PC-9 (cell line): ENCODE measurements at regions of chr9 and their contacts with region 1.

Region 1: DNA sequence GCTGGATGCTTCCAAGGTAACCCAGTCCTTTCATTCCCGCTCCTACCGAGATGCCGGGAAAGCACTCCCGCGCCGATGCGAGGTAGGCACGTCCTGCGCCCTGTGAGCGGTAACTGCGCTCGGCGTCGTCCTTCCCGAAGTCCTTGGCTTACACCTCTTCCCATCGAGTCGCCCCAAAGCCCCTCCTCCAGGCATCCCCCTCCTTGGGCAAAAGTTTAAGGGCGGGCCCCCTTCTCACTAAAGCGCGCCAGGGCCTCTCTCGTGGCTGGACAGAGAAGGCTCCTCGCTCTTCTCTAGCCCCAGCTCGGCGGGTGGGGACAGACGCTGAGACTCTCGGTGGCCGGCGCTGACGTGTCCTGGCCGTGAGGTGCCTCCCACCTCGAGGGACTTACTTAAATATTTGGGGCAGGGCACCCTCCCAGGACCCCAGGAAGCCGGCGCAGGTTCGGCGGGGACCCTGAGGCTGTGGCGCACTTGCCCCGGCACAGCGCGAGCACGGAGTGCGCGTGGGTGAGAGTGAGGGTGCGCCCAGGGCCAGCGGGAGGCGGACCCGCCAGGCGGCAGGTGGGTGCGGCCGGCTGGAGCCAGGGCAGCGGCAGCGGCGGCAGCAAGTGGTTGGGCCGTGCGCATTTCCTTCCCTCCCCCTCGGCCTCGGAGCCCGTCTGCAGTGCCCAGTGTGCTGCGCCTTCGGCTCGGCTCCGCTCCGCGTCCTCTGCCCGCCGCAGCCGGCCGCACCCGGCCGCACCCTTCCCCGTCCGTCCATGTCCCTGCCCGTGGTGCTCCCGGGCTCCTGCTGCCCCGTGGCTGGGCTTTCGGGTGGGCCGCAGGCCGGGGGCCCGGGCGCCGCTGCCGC is at the start of gene ENTREP1:
- DNase-seq: peak; percentile 61 to 71
- H3K4me3 ChIP-seq: peak within 1 kb of the TSS; percentile 75
- H3K27ac ChIP-seq: no peak within 1 kb of the TSS
- H3K4me1 ChIP-seq: peaks cover 5% of the 10 kb centered on the region; the same call in 1 of the 2 replicates
- H3K27me3 ChIP-seq: peaks cover 8% of the 10 kb centered on the region
- CTCF ChIP-seq: no peak
- total RNA-seq, gene ENTREP1: 0.30 and 0.35 TPM in 2 replicates

Region 2: DNA sequence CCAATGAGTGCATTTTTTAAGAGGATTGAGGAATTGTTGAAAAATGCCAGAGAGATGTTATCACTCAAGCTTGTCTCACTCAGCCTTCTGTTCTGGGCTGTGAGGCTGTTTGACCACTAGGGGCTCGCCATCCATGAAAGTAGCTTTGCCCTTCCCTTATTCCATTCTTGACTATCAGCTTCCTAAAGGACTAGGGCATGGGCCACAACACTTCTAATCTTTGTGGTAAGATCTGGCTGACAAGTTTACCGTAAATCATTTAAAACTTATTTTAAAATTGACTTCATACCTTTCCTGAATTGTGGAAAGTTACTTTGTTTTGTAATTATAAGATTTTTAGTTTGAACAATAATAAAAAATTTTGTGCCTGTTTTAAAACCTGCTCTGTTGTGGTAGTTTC is 101.2 kb before region 1 on chr9:
- CTCF ChIA-PET with region 1: interaction called, 14 read pairs
- POLR2A ChIA-PET with region 1: no interaction called
- intact Hi-C with region 1: no loop called
- DNase-seq: peak; percentile 49 to 55
- H3K4me3 ChIP-seq: no peak overlapping the region
- H3K27ac ChIP-seq: no peak overlapping the region
- H3K4me1 ChIP-seq: no peaks in the 10 kb centered on the region
- H3K27me3 ChIP-seq: no peaks in the 10 kb centered on the region
- CTCF ChIP-seq: peak; percentile 84

Region 3: GRCh38 chr9:69379250-69379982 is 54.6 kb after region 1 on chr9:
- CTCF ChIA-PET with region 1: no interaction called
- POLR2A ChIA-PET with region 1: interaction called, 8 read pairs
- intact Hi-C with region 1: loop called (anchors 2 kb)
- DNase-seq: peak; percentile 60 to 74
- H3K4me3 ChIP-seq: peak overlapping the region; percentile 35; the same call in 1 of the 2 replicates
- H3K27ac ChIP-seq: peak overlapping the region; percentile 44
- H3K4me1 ChIP-seq: peaks cover 32% of the 10 kb centered on the region
- H3K27me3 ChIP-seq: no peaks in the 10 kb centered on the region
- CTCF ChIP-seq: no peak

Region 4: GRCh38 chr9:69412741-69413150 is 88.0 kb after region 1 on chr9:
- CTCF ChIA-PET with region 1: no interaction called
- POLR2A ChIA-PET with region 1: interaction called, 6 read pairs
- intact Hi-C with region 1: loop called (anchors 10 kb)
- DNase-seq: peak in 1 of 2 experiments; percentile 66
- H3K4me3 ChIP-seq: no peak overlapping the region
- H3K27ac ChIP-seq: no peak overlapping the region
- H3K4me1 ChIP-seq: no peaks in the 10 kb centered on the region
- H3K27me3 ChIP-seq: no peaks in the 10 kb centered on the region
- CTCF ChIP-seq: peak; percentile 65

Region 5: DNA sequence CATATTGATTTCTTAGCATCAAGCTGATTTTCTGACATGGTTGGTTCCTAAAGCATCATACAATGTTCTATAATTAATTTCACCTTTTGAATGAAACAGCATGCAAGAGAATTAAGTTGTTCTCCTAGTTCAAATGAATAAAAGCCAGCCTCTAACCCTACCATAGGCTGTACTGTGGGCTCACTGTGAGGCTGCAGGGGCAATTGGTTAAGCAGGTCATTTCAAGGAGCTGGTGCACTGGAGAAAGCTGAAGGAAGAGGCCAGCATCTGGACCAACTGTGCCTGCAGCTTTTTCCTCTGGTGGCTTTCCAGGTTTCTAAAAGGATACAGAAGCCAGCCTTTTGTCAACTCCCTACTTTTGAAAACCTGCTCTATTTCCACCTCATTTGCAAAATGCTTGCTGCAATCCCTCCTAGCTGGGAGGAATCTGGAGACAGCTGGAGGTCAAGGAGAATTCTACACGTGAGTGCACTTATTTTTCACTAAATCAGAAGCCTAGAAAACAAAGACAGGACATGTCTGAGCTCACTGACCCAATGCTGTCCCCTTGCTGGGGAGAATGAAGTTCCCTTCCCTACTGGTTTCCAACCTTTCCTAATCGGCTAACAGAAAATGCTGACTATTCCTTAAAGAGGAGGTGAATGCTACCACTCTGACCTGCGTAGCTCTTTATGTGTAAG is 188.5 kb after region 1 on chr9:
- CTCF ChIA-PET with region 1: no interaction called
- POLR2A ChIA-PET with region 1: no interaction called
- intact Hi-C with region 1: no loop called
- DNase-seq: no peak
- H3K4me3 ChIP-seq: no peak overlapping the region
- H3K27ac ChIP-seq: no peak overlapping the region
- H3K4me1 ChIP-seq: no peaks in the 10 kb centered on the region
- H3K27me3 ChIP-seq: no peaks in the 10 kb centered on the region
- CTCF ChIP-seq: no peak

Region 6: GRCh38 chr9:69645488-69645887 is 320.7 kb after region 1 on chr9:
- CTCF ChIA-PET with region 1: no interaction called
- POLR2A ChIA-PET with region 1: no interaction called
- intact Hi-C with region 1: no loop called
- DNase-seq: peak; percentile 61 to 73
- H3K4me3 ChIP-seq: no peak overlapping the region
- H3K27ac ChIP-seq: no peak overlapping the region
- H3K4me1 ChIP-seq: no peaks in the 10 kb centered on the region
- H3K27me3 ChIP-seq: no peaks in the 10 kb centered on the region
- CTCF ChIP-seq: no peak